PC-9 (cell line): ENCODE measurements at regions of chr1 and their contacts with region 1.

Region 1: DNA sequence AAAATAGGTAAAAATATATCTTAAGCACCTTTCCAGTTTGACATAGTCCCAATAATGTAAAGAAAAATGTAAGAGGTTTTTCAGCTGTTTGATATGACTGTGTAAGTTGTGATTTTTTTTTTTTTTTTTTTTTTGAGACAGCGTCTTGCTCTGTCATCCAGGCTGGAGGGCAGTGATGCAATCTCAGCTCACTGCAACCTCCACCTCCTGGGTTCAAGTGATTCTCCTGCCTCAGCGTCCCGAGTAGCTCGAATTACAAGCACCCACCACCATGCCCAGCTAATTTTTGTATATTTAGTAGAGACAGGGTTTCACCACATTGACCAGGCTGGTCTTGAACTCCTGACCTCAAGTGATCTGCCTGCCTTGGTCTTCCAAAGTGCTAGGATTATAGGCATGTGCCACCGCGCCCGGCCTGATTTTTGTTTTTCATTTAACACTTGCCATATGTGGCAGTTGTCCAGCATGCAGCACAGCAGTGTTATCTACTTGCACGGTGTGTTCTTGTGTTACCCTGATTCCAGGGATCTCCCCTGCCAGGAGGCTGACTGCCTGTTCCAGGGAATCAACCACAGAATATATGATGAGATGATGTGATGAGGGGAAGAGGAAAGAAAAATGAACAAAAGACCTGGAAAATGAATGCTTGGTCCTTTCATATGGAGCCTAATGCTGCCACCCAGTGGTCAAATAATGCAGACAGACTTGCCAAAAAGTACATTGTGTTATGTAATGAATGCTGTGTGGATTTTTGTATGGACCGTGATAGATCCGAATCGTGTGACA is 79.0 kb downstream of the RAVER2 start:
- DNase-seq: peak; percentile 47 to 60
- H3K4me3 ChIP-seq: no peak overlapping the region
- H3K27ac ChIP-seq: no peak overlapping the region
- H3K4me1 ChIP-seq: no peaks in the 10 kb centered on the region
- H3K27me3 ChIP-seq: no peaks in the 10 kb centered on the region
- CTCF ChIP-seq: peak; percentile 91

Region 2: GRCh38 chr1:64469977-64470664 is 353.8 kb before region 1 on chr1 and contains the start of gene CACHD1:
- CTCF ChIA-PET with region 1: no interaction called
- POLR2A ChIA-PET with region 1: no interaction called
- intact Hi-C with region 1: loop called (anchors 2 kb)
- DNase-seq: peak in 1 of 2 experiments; percentile 73
- H3K4me3 ChIP-seq: peak within 1 kb of the TSS; percentile 86
- H3K27ac ChIP-seq: no peak within 1 kb of the TSS
- H3K4me1 ChIP-seq: peaks cover 18% of the 10 kb centered on the region
- H3K27me3 ChIP-seq: no peaks in the 10 kb centered on the region; the same call in 1 of the 2 replicates
- CTCF ChIP-seq: no peak
- total RNA-seq, gene CACHD1: 3.1 and 3.8 TPM in 2 replicates

Region 3: DNA sequence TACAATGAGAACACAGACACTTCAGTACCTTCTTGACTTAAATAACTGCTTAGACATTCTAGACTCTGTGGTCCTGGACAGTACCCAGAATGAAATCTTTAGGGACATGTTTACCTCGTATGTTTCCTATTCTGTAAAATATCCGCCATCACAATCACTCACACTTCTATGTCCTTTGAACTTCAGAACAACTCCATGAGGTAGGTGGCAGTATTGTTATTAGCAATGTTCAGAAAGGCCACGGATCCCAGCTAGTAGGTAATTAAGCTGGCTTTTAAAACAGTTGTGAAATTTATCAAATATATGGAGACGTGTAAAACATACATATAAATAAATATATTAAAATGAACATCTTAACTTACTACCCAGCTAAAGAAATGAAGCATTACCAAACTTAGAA is 270.6 kb before region 1 on chr1:
- CTCF ChIA-PET with region 1: interaction called, 10 read pairs
- POLR2A ChIA-PET with region 1: no interaction called
- intact Hi-C with region 1: no loop called
- DNase-seq: no peak
- H3K4me3 ChIP-seq: no peak overlapping the region
- H3K27ac ChIP-seq: no peak overlapping the region
- H3K4me1 ChIP-seq: no peaks in the 10 kb centered on the region
- H3K27me3 ChIP-seq: no peaks in the 10 kb centered on the region
- CTCF ChIP-seq: no peak

Region 4: DNA sequence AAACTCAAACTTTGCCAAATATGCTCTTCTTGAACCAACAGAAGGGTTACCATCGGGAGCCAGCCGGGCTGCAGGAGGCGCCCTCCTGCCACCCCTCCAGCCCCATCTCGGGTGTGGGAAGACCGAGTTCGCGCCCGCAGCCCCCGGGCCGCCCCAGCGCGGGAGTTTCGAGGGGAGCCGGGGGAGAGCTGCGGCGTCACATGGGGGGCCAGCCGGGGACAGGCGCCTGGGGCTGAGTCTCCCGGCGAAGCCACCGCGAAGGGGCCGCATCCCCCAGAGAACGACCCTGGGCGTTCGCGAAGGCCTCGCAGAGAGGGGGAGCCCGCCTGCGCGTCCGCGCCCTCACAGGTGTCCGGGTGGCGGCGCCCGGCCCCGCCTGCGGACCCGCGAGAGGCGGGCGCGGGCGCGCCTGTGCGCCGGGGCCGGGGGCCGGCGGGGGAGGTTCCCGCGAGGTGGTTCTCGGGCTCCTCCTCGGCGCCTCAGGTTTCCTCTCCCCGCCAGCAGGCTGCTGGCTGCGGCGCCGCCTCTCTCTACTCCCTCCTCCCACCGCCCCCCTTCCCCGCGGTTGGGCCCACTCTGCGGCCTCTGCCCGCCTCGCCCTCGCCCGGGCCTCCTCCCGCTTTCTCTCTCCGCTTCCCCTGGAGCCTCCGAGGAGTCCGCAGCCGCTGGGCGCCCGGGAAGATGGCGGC is 79.2 kb before region 1 on chr1 and contains the start of gene RAVER2:
- CTCF ChIA-PET with region 1: no interaction called
- POLR2A ChIA-PET with region 1: no interaction called
- intact Hi-C with region 1: loop called (anchors 5 kb)
- DNase-seq: peak; percentile 55 to 90
- H3K4me3 ChIP-seq: peak within 1 kb of the TSS; percentile 85
- H3K27ac ChIP-seq: peak within 1 kb of the TSS; percentile 50
- H3K4me1 ChIP-seq: peaks cover 21% of the 10 kb centered on the region; the same call in 1 of the 2 replicates
- H3K27me3 ChIP-seq: no peaks in the 10 kb centered on the region
- CTCF ChIP-seq: peak; percentile 62; the same call in 1 of the 2 replicates
- total RNA-seq, gene RAVER2: 12.4 and 13.1 TPM in 2 replicates

Region 5: DNA sequence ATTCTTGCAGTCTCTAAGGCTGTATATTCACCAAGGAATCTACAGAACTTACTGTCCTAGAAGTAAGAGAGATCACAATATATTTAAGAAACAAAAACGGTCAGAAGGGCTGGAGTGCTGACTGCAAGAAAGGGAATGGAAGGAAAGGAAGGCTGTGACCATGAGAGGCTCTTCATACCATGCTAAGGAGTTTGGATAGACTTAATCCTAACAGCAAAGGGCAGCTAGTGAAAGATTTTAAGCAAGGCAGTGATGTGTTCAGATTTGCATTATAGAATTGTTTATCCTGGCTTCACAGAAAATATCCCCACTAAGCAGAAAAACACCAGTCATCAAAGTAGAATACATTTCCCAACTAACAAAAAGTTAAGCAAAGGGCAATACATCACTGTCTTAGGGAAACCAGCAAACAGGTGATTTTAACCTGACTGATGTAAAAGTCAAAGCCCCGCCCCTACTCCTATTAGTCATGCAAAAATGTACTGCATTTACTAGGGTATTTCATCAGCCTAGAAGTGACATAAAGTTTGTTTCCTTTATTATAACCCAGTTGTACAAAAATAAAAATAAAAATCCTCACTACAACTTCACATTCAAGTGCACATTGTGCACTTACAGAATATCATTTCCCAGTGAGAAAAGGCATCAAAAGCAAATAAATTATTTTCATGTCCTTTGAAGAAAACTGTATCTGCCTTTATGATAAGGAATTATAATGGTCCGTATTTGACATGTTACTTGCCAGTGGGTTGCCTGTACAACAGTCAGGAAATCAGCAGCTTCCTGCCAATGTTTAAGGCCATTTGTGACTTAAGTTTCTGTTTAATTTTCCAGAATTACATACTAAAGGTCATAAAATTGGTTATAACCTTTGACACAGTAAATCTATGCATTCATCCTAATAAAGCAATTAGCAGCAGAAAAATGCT is 125.3 kb after region 1 on chr1:
- CTCF ChIA-PET with region 1: no interaction called
- POLR2A ChIA-PET with region 1: no interaction called
- intact Hi-C with region 1: no loop called
- DNase-seq: peak; percentile 38 to 84
- H3K4me3 ChIP-seq: peak overlapping the region; percentile 13; the same call in 1 of the 2 replicates
- H3K27ac ChIP-seq: peak overlapping the region; percentile 98
- H3K4me1 ChIP-seq: peaks cover 49% of the 10 kb centered on the region
- H3K27me3 ChIP-seq: no peaks in the 10 kb centered on the region
- CTCF ChIP-seq: no peak